Activated B cell treated with CpG ODN at 0.5 μM for 24 hours (primary cell): ENCODE measurements at regions of chr6 and their contacts with region 1.

Region 1: GRCh38 chr6:89080542-89081422 is at the start of gene PNRC1:
- DNase-seq: peak; percentile 100
- ATAC-seq: peak; percentile 77
- H3K4me3 Mint-ChIP-seq: peak within 1 kb of the TSS; percentile 95
- H3K27ac Mint-ChIP-seq: peak within 1 kb of the TSS; percentile 99
- H3K4me1 Mint-ChIP-seq: peaks cover 39% of the 10 kb centered on the region
- H3K27me3 Mint-ChIP-seq: no peaks in the 10 kb centered on the region
- CTCF ChIP-seq: no peak
- total RNA-seq, gene PNRC1: 220 and 229 TPM in 2 replicates

Region 2: GRCh38 chr6:87209812-87210211 is 1871.0 kb before region 1 on chr6:
- CTCF ChIA-PET with region 1: no interaction called
- POLR2A ChIA-PET with region 1: no interaction called
- intact Hi-C with region 1: no loop called
- DNase-seq: no peak
- ATAC-seq: no peak
- H3K4me3 Mint-ChIP-seq: no peak overlapping the region
- H3K27ac Mint-ChIP-seq: no peak overlapping the region
- H3K4me1 Mint-ChIP-seq: peaks cover 66% of the 10 kb centered on the region
- H3K27me3 Mint-ChIP-seq: no peaks in the 10 kb centered on the region
- CTCF ChIP-seq: no peak

Region 3: DNA sequence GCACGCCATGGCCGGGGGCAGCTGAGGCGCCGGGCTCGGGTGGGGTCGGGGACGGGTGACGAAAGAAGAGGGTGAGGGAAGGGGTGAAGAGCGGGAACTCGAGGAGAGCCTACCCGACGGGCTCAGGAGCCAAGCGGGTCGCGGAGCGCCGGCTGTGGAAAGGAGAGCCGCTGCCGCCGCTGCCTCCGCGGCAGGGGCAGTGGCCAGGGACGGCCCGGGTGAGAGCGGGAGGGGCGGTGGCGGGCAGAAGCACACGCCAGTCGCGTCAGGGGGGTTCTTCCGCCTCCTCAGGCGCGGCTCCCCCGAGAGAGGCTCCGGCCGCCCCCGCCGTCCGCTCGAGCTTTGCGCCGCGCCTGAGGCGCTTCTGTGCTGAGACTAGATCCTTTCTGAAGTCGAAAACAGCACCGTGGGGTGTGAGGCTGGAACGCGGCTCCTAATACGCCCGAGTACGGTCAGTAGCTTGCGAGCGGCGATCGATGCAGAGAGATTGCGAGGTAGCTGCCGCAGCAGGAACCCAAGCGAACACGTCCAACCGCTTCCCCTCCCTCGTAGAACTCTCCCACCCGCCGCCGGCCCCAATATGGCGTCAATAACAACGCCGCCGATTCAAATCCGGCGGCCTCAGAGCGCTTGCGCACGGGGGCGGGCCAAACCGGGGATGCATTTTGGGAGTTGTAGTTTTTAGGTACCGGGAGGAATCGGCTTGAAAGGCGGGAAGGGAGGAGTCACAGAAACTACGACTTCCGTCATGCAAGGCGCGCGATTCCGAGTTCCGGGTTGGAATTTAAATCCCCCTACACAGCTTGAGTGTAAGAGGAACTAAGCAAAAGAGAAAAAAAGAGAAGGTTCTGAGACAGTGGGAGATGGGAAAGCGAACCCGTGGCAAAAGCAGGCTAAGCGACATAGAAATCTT is 1378.8 kb before region 1 on chr6 and contains the start of gene AKIRIN2:
- CTCF ChIA-PET with region 1: no interaction called
- POLR2A ChIA-PET with region 1: interaction called, 13 read pairs
- intact Hi-C with region 1: loop called (anchors 2 kb)
- DNase-seq: peak; percentile 97
- ATAC-seq: peak; percentile 78
- H3K4me3 Mint-ChIP-seq: peak within 1 kb of the TSS; percentile 97
- H3K27ac Mint-ChIP-seq: peak within 1 kb of the TSS; percentile 97
- H3K4me1 Mint-ChIP-seq: peaks cover 53% of the 10 kb centered on the region
- H3K27me3 Mint-ChIP-seq: no peaks in the 10 kb centered on the region
- CTCF ChIP-seq: no peak
- total RNA-seq, gene AKIRIN2: 61.9 and 76.4 TPM in 2 replicates

Region 4: DNA sequence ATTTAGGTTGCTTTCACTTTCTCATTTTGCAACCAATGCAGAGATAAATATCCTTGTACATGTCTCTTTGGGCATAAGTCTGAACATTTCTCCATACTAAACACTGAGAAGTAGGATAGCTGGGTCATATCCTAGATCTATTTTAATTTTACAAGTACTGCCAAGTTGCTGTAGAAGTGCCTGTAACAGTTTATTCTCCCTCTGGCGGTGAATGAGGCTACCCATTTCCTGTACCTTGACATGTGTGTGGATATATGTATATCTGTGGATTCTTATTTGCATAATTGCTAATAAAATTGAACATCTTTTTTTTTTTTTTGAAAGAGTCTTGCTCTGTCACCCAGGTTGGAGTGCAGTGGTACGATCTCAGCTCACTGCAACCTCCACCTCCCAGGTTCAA is 48.2 kb before region 1 on chr6:
- CTCF ChIA-PET with region 1: no interaction called
- POLR2A ChIA-PET with region 1: no interaction called
- intact Hi-C with region 1: loop called (anchors 2 kb)
- DNase-seq: no peak
- ATAC-seq: no peak
- H3K4me3 Mint-ChIP-seq: no peak overlapping the region
- H3K27ac Mint-ChIP-seq: no peak overlapping the region
- H3K4me1 Mint-ChIP-seq: no peaks in the 10 kb centered on the region
- H3K27me3 Mint-ChIP-seq: peaks cover 12% of the 10 kb centered on the region
- CTCF ChIP-seq: no peak

Region 5: GRCh38 chr6:89352278-89353117 is 271.7 kb after region 1 on chr6 and contains the start of gene UBE2J1:
- CTCF ChIA-PET with region 1: no interaction called
- POLR2A ChIA-PET with region 1: interaction called, 98 read pairs
- intact Hi-C with region 1: loop called (anchors 1 kb)
- DNase-seq: peak; percentile 83
- ATAC-seq: peak; percentile 77
- H3K4me3 Mint-ChIP-seq: peak within 1 kb of the TSS; percentile 94
- H3K27ac Mint-ChIP-seq: peak within 1 kb of the TSS; percentile 94
- H3K4me1 Mint-ChIP-seq: peaks cover 86% of the 10 kb centered on the region
- H3K27me3 Mint-ChIP-seq: no peaks in the 10 kb centered on the region
- CTCF ChIP-seq: no peak
- total RNA-seq, gene UBE2J1: 32.3 and 32.8 TPM in 2 replicates

Region 6: GRCh38 chr6:89597988-89598692 is 517.4 kb after region 1 on chr6:
- CTCF ChIA-PET with region 1: no interaction called
- POLR2A ChIA-PET with region 1: interaction called, 3 read pairs
- intact Hi-C with region 1: loop called (anchors 1 kb)
- DNase-seq: no peak
- ATAC-seq: no peak
- H3K4me3 Mint-ChIP-seq: no peak overlapping the region
- H3K27ac Mint-ChIP-seq: no peak overlapping the region
- H3K4me1 Mint-ChIP-seq: peaks cover 30% of the 10 kb centered on the region
- H3K27me3 Mint-ChIP-seq: no peaks in the 10 kb centered on the region
- CTCF ChIP-seq: no peak

Region 7: GRCh38 chr6:90586836-90587638 is 1506.3 kb after region 1 on chr6 and contains the start of gene MAP3K7:
- CTCF ChIA-PET with region 1: no interaction called
- POLR2A ChIA-PET with region 1: interaction called, 3 read pairs
- intact Hi-C with region 1: loop called (anchors 5 kb)
- DNase-seq: peak; percentile 91
- ATAC-seq: peak; percentile 86
- H3K4me3 Mint-ChIP-seq: peak within 1 kb of the TSS; percentile 94
- H3K27ac Mint-ChIP-seq: peak within 1 kb of the TSS; percentile 99
- H3K4me1 Mint-ChIP-seq: peaks cover 41% of the 10 kb centered on the region
- H3K27me3 Mint-ChIP-seq: peaks cover 7% of the 10 kb centered on the region
- CTCF ChIP-seq: no peak
- total RNA-seq, gene MAP3K7: 23.8 and 27.2 TPM in 2 replicates